Right ventricle myocardium inferior (tissue), 1 donor: ENCODE measurements at regions of chr1 and their contacts with region 1.

Region 1: GRCh38 chr1:78114034-78114956 is 68.5 kb downstream of the GIPC2 start:
- DNase-seq: no peak
- ATAC-seq: peak; percentile 75

Region 2: DNA sequence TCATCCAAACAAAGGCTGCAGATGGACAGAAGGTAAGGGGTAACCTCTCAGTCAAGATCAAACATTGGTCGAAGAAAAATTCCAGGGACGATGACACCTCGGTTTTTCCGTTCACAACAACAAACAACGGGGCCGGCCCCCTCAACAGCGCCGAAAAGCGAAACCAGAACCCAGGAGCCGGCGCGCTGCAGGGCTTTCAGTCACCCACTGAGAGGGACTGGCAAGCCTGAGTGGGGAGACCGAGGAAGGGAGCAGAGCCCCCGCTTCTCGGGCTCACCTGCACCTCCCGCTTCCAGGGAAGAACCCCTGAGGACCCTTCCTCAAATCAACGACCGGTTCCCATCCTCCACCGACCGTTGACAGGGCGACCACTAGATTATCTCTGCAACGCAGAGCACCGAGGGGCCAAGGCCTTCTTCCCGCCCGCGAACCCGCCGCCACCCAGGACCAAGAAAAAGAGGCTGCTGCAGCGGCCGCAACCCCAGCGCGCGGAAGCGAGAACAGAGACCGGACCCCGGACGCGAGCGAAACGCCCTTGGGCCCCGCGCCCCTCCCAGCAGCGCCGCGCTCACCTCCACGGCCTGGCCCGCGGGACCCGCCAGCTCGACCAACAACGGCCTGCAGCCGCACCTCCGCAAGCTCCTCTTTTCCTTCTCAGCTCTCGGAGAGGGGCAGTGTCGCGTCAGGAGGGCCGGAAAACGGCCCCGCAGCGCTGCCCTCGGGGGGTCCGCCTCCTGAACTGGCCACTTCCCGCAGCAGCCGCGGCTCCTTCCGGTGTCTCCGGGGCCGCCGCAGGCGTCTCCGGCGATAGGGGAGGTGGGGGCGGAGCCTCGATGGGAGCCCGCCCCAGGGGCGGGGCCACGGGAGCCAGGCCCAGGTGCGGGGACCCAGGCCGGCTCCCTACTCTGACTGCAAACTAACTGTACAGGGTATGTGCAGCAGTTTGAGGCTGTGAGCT is 354.9 kb before region 1 on chr1 and contains the start of gene USP33:
- intact Hi-C with region 1: loop called (anchors 10 kb)
- DNase-seq: peak; percentile 93
- ATAC-seq: peak; percentile 99
- total RNA-seq, gene USP33: 26.9 TPM

Region 3: GRCh38 chr1:77978969-77979876 is 135.1 kb before region 1 on chr1 and contains the start of gene FUBP1:
- intact Hi-C with region 1: loop called (anchors 1 kb)
- DNase-seq: peak; percentile 95
- ATAC-seq: peak; percentile 92
- total RNA-seq, gene FUBP1: 48.9 TPM

Region 4: GRCh38 chr1:78145105-78145580 is 30.8 kb after region 1 on chr1:
- intact Hi-C with region 1: no loop called
- DNase-seq: no peak
- ATAC-seq: peak; percentile 80